ENCODE measurements at regions of chr4 and their contacts with region 1.

Region 1: GRCh38 chr4:39365830-39366771 is at the start of gene RFC1:
- DNase-seq: peak; percentile 89
- H3K4me3 Mint-ChIP-seq: peak within 1 kb of the TSS; percentile 90
- H3K27ac Mint-ChIP-seq: peak within 1 kb of the TSS; percentile 86
- H3K4me1 Mint-ChIP-seq: peaks cover 31% of the 10 kb centered on the region
- H3K27me3 Mint-ChIP-seq: peaks cover 1% of the 10 kb centered on the region
- total RNA-seq, gene RFC1: 56.6 and 64.7 TPM in 2 replicates

Region 2: GRCh38 chr4:39181905-39182638 is 184.0 kb before region 1 on chr4 and contains the start of gene WDR19:
- intact Hi-C with region 1: loop called (anchors 2 kb)
- DNase-seq: peak; percentile 99
- H3K4me3 Mint-ChIP-seq: no peak within 1 kb of the TSS
- H3K27ac Mint-ChIP-seq: no peak within 1 kb of the TSS
- H3K4me1 Mint-ChIP-seq: peaks cover 9% of the 10 kb centered on the region
- H3K27me3 Mint-ChIP-seq: peaks cover 7% of the 10 kb centered on the region
- total RNA-seq, gene WDR19: 8.9 and 10.5 TPM in 2 replicates

Measured in activated T-helper 2 cell treated with anti-CD3 and anti-CD28 coated beads, Interferon-gamma antibody, Interleukin-2, Interleukin-4, amounts not matched to agents 10 μg/mL and 5 μg/mL and 100 μg/mL, durations not matched to agents 14 hours and 24 hours and 36 hours (primary cell).